ENCODE measurements at regions of chr16 and their contacts with region 1.

Region 1: GRCh38 chr16:10876799-10877341 is at the start of gene CIITA:
- DNase-seq: peak; percentile 97
- ATAC-seq: peak; percentile 56
- H3K4me3 ChIP-seq: peak within 1 kb of the TSS; percentile 78
- H3K27ac ChIP-seq: peak within 1 kb of the TSS; percentile 94
- H3K4me1 ChIP-seq: peaks cover 40% of the 10 kb centered on the region
- H3K27me3 ChIP-seq: no peaks in the 10 kb centered on the region
- CTCF ChIP-seq: no peak
- EP300 ChIP-seq: peak; percentile 28 to 85; a peak in 3 of 4 replicates
- POLR2A ChIP-seq: peak; percentile 86
- RAD21 ChIP-seq: peak; percentile 32; the same call in 1 of the 2 replicates
- polyA plus RNA-seq, gene CIITA: 11.5 to 12.5 TPM

Region 2: GRCh38 chr16:10314811-10315210 is 562.1 kb before region 1 on chr16:
- CTCF ChIA-PET with region 1: no interaction called
- POLR2A ChIA-PET with region 1: no interaction called
- RAD21 ChIA-PET with region 1: interaction called, 7 read pairs
- SMC1A ChIA-PET with region 1: no interaction called
- in situ Hi-C with region 1: loop called (anchors 25 kb)
- intact Hi-C with region 1: no loop called
- DNase-seq: no peak
- ATAC-seq: peak; percentile 9; the same call in 1 of the 3 replicates
- H3K4me3 ChIP-seq: no peak overlapping the region
- H3K27ac ChIP-seq: no peak overlapping the region
- H3K4me1 ChIP-seq: peaks cover 13% of the 10 kb centered on the region
- H3K27me3 ChIP-seq: no peaks in the 10 kb centered on the region
- CTCF ChIP-seq: peak; percentile 9 to 52 (median 29); a peak in 4 of 6 replicates
- EP300 ChIP-seq: no peak
- POLR2A ChIP-seq: no peak
- RAD21 ChIP-seq: peak; percentile 63

Region 3: GRCh38 chr16:10521681-10522274 is 355.1 kb before region 1 on chr16:
- CTCF ChIA-PET with region 1: no interaction called
- POLR2A ChIA-PET with region 1: no interaction called
- RAD21 ChIA-PET with region 1: no interaction called
- SMC1A ChIA-PET with region 1: no interaction called
- in situ Hi-C with region 1: no loop called
- intact Hi-C with region 1: no loop called
- DNase-seq: no peak
- ATAC-seq: peak; percentile 91
- H3K4me3 ChIP-seq: no peak overlapping the region
- H3K27ac ChIP-seq: no peak overlapping the region
- H3K4me1 ChIP-seq: no peaks in the 10 kb centered on the region
- H3K27me3 ChIP-seq: no peaks in the 10 kb centered on the region
- CTCF ChIP-seq: peak; percentile 78 to 86 (median 81)
- EP300 ChIP-seq: no peak
- POLR2A ChIP-seq: no peak
- RAD21 ChIP-seq: peak; percentile 81

Region 4: GRCh38 chr16:10776280-10776679 is 100.6 kb before region 1 on chr16:
- CTCF ChIA-PET with region 1: interaction called, 15 read pairs
- POLR2A ChIA-PET with region 1: interaction called, 11 read pairs
- RAD21 ChIA-PET with region 1: interaction called, 35 read pairs
- SMC1A ChIA-PET with region 1: interaction called, 18 read pairs
- in situ Hi-C with region 1: no loop called
- intact Hi-C with region 1: loop called (anchors 1 kb)
- DNase-seq: peak; percentile 78
- ATAC-seq: peak; percentile 82
- H3K4me3 ChIP-seq: no peak overlapping the region
- H3K27ac ChIP-seq: no peak overlapping the region
- H3K4me1 ChIP-seq: peaks cover 29% of the 10 kb centered on the region
- H3K27me3 ChIP-seq: no peaks in the 10 kb centered on the region
- CTCF ChIP-seq: no peak
- EP300 ChIP-seq: peak; percentile 85
- POLR2A ChIP-seq: no peak
- RAD21 ChIP-seq: peak; percentile 13; the same call in 1 of the 2 replicates

Region 5: DNA sequence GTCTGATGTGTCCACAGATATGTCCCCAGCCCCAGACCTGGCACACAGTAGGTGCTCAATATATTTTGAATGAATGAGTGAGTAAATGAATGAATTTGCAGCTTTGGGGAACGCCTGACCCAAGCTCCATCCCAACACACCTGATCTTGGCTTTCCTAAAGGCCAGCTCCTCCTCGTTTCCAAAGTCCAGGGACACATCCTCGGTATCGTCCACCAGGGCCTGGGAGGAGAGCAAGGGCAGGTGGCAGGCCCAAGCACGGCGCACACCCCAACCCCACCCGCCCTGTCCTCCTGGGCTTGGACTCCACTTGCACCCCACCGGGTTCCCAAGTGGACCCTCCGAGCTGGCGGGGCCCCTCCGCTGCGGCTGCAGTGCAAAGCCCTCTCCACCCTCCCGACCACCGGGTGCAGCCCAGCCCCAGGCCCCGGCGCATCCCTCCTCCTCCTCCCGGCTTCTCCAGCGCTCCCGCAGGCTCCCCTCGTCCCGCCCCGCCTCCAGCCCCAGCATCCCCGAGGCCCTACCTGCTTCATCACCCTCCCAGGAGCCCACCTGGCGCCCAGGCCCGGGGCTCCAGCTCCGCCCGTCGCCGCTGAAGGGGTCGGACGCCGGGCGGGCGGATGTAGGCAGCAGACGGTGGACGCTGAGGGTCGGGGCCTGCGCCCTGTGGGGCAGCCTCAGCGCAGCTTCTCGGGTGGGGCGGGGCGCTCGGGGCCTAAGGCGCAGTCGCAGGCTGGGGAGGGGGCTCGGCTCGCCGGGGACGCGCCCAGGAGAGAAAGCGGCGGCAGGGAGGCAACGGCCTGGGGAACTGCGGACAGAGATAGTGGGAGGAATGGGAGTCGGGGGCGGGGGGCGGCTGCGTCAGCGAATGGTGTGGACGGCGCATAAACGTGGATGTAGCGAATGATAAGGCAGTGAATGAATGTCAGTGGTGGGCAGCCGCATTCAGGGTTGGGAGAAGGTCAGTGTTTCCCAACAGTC is 58.6 kb before region 1 on chr16 and contains the start of gene TVP23A:
- CTCF ChIA-PET with region 1: interaction called, 11 read pairs
- POLR2A ChIA-PET with region 1: interaction called, 10 read pairs
- RAD21 ChIA-PET with region 1: interaction called, 44 read pairs
- SMC1A ChIA-PET with region 1: interaction called, 17 read pairs
- in situ Hi-C with region 1: no loop called
- intact Hi-C with region 1: loop called (anchors 2 kb)
- DNase-seq: no peak
- ATAC-seq: no peak
- H3K4me3 ChIP-seq: no peak within 1 kb of the TSS
- H3K27ac ChIP-seq: peak within 1 kb of the TSS; percentile 38; the same call in 1 of the 2 replicates
- H3K4me1 ChIP-seq: peaks cover 37% of the 10 kb centered on the region
- H3K27me3 ChIP-seq: no peaks in the 10 kb centered on the region
- CTCF ChIP-seq: no peak
- EP300 ChIP-seq: no peak
- POLR2A ChIP-seq: no peak
- RAD21 ChIP-seq: no peak
- polyA plus RNA-seq, gene TVP23A: 4.6 to 6.4 TPM

Region 6: DNA sequence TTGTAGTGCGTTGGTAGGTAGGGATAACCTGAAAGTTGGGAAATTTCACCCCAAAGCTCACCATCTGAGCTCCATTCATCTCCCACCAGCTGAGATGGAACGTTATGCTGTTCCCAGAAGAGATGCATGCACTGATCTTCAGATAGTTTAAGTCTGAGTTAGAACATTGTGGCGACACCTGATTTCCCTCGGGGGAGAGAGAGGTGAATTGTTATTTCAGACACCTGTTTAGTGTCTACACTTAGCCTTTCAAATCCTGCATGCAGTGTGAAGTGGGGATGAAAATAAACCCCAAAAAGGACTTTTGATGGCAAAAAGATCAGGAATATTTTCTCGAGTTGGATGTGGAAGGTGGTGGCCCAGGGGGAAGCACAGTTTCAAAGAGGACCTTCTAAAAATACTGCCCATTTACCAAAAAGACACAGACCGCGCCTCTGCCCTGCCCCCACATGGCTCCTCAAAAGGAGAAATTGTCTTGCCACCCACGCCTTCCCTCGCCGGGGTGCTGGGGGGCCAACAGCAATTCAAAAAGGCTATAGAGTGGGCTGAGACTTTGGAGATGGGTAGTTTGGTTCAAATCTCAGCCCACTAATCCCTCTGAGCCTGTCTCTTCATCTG is 11.6 kb after region 1 on chr16:
- CTCF ChIA-PET with region 1: interaction called, 73 read pairs
- POLR2A ChIA-PET with region 1: interaction called, 133 read pairs
- RAD21 ChIA-PET with region 1: interaction called, 142 read pairs
- SMC1A ChIA-PET with region 1: interaction called, 133 read pairs
- in situ Hi-C with region 1: no loop called
- intact Hi-C with region 1: loop called (anchors 2 kb)
- DNase-seq: no peak
- ATAC-seq: peak; percentile 7; the same call in 1 of the 3 replicates
- H3K4me3 ChIP-seq: peak overlapping the region; percentile 67
- H3K27ac ChIP-seq: peak overlapping the region; percentile 59
- H3K4me1 ChIP-seq: peaks cover 96% of the 10 kb centered on the region
- H3K27me3 ChIP-seq: no peaks in the 10 kb centered on the region
- CTCF ChIP-seq: no peak
- EP300 ChIP-seq: no peak; a peak in 1 of 4 replicates
- POLR2A ChIP-seq: no peak
- RAD21 ChIP-seq: 0 out of 2 replicates have a peak, but pooled peaks have one; percentile 17

Region 7: DNA sequence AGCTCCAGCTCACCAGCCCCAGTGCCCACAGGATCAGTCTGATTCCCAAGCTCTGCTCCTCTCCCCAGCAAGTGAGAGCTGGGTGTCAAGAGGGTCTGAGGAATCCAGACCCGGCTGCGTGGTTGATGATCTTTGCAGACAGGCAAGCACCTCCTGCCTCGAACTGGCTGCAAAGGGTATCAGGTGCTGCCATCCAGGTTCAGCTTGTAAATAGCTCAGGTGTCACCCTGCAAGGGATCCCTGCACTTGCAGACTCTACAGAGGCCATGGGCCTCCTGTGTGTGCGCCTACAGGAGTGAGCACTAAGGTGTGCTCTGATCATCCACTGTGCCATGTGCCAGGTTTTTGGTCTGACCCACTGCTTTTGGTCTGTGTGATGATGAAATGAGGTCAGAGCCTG is 49.2 kb after region 1 on chr16:
- CTCF ChIA-PET with region 1: no interaction called
- POLR2A ChIA-PET with region 1: no interaction called
- RAD21 ChIA-PET with region 1: interaction called, 3 read pairs
- SMC1A ChIA-PET with region 1: interaction called, 15 read pairs
- in situ Hi-C with region 1: no loop called
- intact Hi-C with region 1: no loop called
- DNase-seq: no peak
- ATAC-seq: no peak
- H3K4me3 ChIP-seq: no peak overlapping the region
- H3K27ac ChIP-seq: no peak overlapping the region
- H3K4me1 ChIP-seq: no peaks in the 10 kb centered on the region
- H3K27me3 ChIP-seq: no peaks in the 10 kb centered on the region
- CTCF ChIP-seq: no peak
- EP300 ChIP-seq: no peak
- POLR2A ChIP-seq: 0 out of 2 replicates have a peak, but pooled peaks have one; percentile 66
- RAD21 ChIP-seq: no peak